ENCODE measurements at regions of chr2 and their contacts with region 1.

Region 1: DNA sequence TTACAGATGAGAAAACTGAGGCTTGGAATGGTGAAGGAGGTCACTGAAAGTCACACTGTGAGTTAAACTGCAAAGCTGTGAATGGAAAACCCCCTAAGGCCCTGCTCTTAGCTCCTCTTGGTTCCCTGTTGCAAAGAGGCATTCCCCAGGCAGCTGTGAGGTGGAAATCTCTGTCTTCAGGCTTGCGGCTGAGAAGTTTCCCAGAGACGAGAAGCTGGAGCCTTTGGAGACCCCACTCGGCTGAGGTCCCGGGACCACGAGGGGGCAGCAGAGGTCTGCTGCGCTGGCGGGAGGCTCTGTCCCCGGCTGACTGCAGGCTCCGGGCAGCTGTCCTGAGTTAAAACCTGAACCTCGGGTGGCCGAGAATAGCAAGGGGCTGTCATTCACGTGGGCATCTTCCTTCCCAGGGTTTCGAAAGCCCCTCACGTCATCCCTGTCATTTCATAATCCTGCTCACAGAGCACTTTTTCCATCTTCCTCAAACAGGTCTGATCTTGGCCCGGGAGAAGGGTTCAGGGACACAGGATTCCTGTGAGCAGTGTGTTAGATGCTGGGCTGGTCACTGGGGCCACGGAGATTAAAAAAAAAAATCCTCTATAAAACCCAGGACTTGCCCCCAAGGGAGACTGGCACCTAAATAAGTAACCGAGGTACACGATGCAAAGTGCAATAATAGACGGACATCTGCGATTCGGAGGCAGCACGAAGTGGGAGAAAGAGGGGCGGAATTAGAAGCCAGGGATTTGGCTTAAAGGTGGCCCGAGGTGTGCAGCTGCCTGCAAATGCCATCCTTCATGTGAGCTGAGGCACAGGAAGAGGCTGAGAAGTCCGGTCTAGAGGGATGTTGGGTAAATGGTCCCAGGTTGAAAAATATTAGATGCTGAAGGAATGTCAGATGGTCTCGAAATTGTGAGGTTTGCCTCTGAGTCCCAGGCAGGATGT is 24.6 kb upstream of the ATOH8 start:
- DNase-seq: peak; percentile 71 to 95
- H3K4me3 ChIP-seq: no peak overlapping the region
- H3K27ac ChIP-seq: no peak overlapping the region
- H3K4me1 ChIP-seq: no peaks in the 10 kb centered on the region
- H3K27me3 ChIP-seq: no peaks in the 10 kb centered on the region
- CTCF ChIP-seq: peak; percentile 84 to 98 (median 95)
- EP300 ChIP-seq: no peak
- POLR2A ChIP-seq: no peak
- RAD21 ChIP-seq: peak; percentile 99 to 100

Region 2: GRCh38 chr2:85741833-85742455 is 12.8 kb after region 1 on chr2:
- CTCF ChIA-PET with region 1: interaction called, 60 read pairs
- POLR2A ChIA-PET with region 1: interaction called, 3 read pairs
- DNase-seq: no peak
- H3K4me3 ChIP-seq: no peak overlapping the region
- H3K27ac ChIP-seq: no peak overlapping the region
- H3K4me1 ChIP-seq: peaks cover 0 to 7% (median 4%) of the 10 kb centered on the region in 4 experiments; a peak in 2 of 7 replicates
- H3K27me3 ChIP-seq: peaks cover 0 to 3% (median 2%) of the 10 kb centered on the region in 4 experiments; a peak in 3 of 7 replicates
- CTCF ChIP-seq: no peak
- EP300 ChIP-seq: no peak
- POLR2A ChIP-seq: no peak
- RAD21 ChIP-seq: no peak

Region 3: GRCh38 chr2:85772019-85772745 is 43.0 kb after region 1 on chr2:
- CTCF ChIA-PET with region 1: interaction called, 986 read pairs
- POLR2A ChIA-PET with region 1: no interaction called
- DNase-seq: peak in 1 of 2 experiments; percentile 66
- H3K4me3 ChIP-seq: peak overlapping the region in 2 of 4 experiments; percentile 5 to 7; a peak in 2 of 8 replicates
- H3K27ac ChIP-seq: no peak overlapping the region
- H3K4me1 ChIP-seq: peaks cover 0 to 39% (median 26%) of the 10 kb centered on the region in 4 experiments; a peak in 6 of 7 replicates
- H3K27me3 ChIP-seq: peaks cover 0 to 27% (median 17%) of the 10 kb centered on the region in 4 experiments; a peak in 6 of 7 replicates
- CTCF ChIP-seq: peak in 2 of 3 experiments; percentile 7 to 29; a peak in 2 of 4 replicates
- EP300 ChIP-seq: no peak
- POLR2A ChIP-seq: no peak
- RAD21 ChIP-seq: peak in 1 of 2 experiments; percentile 4; a peak in 2 of 4 replicates

Region 4: DNA sequence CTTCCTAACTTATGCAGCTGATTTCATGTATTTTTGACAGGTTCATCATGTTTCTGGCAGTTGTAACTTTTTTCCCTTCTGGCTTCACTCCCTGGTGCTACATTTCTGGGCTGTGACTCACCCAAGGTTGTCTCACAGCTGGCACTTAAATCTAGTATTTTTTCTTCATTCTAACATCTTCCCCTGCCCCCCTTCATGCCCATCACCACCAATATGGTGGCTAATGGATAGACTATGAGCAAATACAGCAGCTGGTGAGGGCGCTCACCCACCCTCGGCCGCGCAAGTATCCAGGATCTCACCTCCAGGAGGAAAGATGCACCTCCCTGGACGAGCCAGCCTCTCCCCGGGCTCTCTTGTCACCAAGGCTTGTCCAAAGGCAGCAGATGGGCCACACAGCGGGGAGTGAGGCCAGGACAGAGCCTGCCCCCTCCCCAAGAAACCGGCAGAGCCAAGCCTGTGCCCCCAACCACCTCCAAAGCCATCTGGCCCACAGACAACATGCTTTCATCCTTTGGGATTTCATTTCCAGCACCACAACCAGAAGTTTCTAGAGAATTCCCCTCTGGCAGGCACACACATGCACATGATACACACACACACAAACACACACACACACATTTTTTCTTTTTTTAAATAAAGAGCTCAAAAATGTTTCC is 63.8 kb after region 1 on chr2:
- CTCF ChIA-PET with region 1: interaction called, 986 read pairs
- POLR2A ChIA-PET with region 1: no interaction called
- DNase-seq: no peak
- H3K4me3 ChIP-seq: no peak overlapping the region
- H3K27ac ChIP-seq: no peak overlapping the region
- H3K4me1 ChIP-seq: no peaks in the 10 kb centered on the region; a peak in 1 of 7 replicates
- H3K27me3 ChIP-seq: no peaks in the 10 kb centered on the region; a peak in 1 of 7 replicates
- CTCF ChIP-seq: no peak
- EP300 ChIP-seq: no peak
- POLR2A ChIP-seq: no peak
- RAD21 ChIP-seq: no peak

Region 5: GRCh38 chr2:85804583-85804982 is 75.4 kb after region 1 on chr2:
- CTCF ChIA-PET with region 1: interaction called, 97 read pairs
- POLR2A ChIA-PET with region 1: no interaction called
- DNase-seq: no peak
- H3K4me3 ChIP-seq: no peak overlapping the region
- H3K27ac ChIP-seq: no peak overlapping the region
- H3K4me1 ChIP-seq: no peaks in the 10 kb centered on the region
- H3K27me3 ChIP-seq: peaks cover 0 to 2% (median 0%) of the 10 kb centered on the region in 4 experiments; a peak in 1 of 7 replicates
- CTCF ChIP-seq: peak; percentile 51 to 61 (median 59)
- EP300 ChIP-seq: no peak
- POLR2A ChIP-seq: no peak
- RAD21 ChIP-seq: peak; percentile 62

Region 6: GRCh38 chr2:85819811-85820510 is 90.8 kb after region 1 on chr2:
- CTCF ChIA-PET with region 1: interaction called, 97 read pairs
- POLR2A ChIA-PET with region 1: no interaction called
- DNase-seq: no peak
- H3K4me3 ChIP-seq: no peak overlapping the region
- H3K27ac ChIP-seq: no peak overlapping the region
- H3K4me1 ChIP-seq: no peaks in the 10 kb centered on the region; a peak in 3 of 7 replicates
- H3K27me3 ChIP-seq: no peaks in the 10 kb centered on the region; a peak in 1 of 7 replicates
- CTCF ChIP-seq: no peak
- EP300 ChIP-seq: no peak
- POLR2A ChIP-seq: no peak
- RAD21 ChIP-seq: no peak